ENCODE measurements at regions of chr2 and their contacts with region 1.

Region 1: GRCh38 chr2:96265840-96266679 is at the starts of genes CIAO1 and TMEM127:
- DNase-seq: peak; percentile 97 to 100 (median 99)
- ATAC-seq: peak; percentile 95
- H3K4me3 ChIP-seq: peak within 1 kb of the TSS; percentile 57
- H3K4me1 ChIP-seq: peaks cover 37% of the 10 kb centered on the region
- CTCF ChIP-seq: peak; percentile 17
- total RNA-seq, gene CIAO1: 57.5 to 67.1 (median 60.6) TPM
- total RNA-seq, gene TMEM127: 82.3 to 136 (median 87.9) TPM

Region 2: DNA sequence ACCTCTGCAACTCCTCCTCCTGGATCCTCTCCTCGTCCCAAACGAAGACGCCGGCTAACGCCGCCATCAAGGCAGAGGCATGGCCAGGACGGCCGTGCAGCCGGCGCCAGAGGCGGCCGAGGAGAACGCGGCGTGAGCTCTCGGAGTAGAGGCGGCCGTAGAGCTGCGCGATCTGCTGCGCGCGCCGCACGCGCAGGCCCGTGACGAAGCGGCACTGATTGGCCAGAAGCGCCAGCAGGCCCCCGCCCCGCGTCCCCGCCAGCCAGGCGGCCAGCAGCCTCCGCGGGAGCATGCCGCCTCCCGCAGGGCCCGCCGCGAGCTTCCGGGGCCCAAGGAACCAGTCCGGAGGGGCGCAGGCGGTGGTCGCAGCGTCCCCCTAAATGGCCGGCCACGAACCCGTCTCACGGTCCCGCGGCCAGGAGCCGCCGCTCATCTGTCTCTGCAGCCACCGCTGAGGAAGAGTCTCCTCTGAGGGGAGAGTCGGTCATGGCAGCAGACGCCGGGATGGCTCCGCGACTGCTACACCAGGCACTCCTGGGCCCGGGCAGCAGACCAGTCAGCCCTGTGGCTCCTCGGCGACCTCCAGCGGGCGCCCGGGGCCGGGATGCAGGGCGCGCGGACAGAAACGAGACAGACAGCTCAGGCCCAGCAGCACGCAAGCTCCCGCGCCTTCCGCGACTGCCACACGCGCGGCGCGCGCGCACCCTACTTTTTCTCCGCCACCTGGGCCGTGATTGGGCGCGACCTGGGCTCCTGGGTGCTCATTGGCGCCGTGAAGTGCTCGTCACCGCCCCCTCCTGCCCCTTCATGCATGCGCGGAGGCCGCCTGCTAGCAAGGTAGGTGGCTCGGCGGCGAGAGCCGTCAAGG is 57.7 kb before region 1 on chr2 and contains the start of gene STARD7:
- intact Hi-C with region 1: loop called in 1 of 2 experiments (anchors 10 kb)
- DNase-seq: peak; percentile 99
- ATAC-seq: peak; percentile 97
- H3K4me3 ChIP-seq: peak within 1 kb of the TSS; percentile 89
- H3K4me1 ChIP-seq: peaks cover 36% of the 10 kb centered on the region
- CTCF ChIP-seq: peak; percentile 18
- total RNA-seq, gene STARD7: 118 to 123 (median 122) TPM

Measured in mucosa of descending colon (tissue), 3 donors.